Endothelial cell of umbilical vein (primary cell): ENCODE measurements at regions of chr10 and their contacts with region 1.

Region 1: GRCh38 chr10:25080880-25081581 is 64.6 kb downstream of the THNSL1 start:
- DNase-seq: peak; percentile 93
- H3K4me3 ChIP-seq: no peak overlapping the region
- H3K27ac ChIP-seq: no peak overlapping the region
- H3K4me1 ChIP-seq: no peaks in the 10 kb centered on the region
- H3K27me3 ChIP-seq: peaks cover 0 to 2% of the 10 kb centered on the region in 2 experiments
- CTCF ChIP-seq: peak; percentile 80 to 91
- POLR2A ChIP-seq: no peak

Region 2: GRCh38 chr10:24597426-24597825 is 483.6 kb before region 1 on chr10:
- CTCF ChIA-PET with region 1: interaction called, 13 read pairs
- POLR2A ChIA-PET with region 1: no interaction called
- dilution Hi-C with region 1: no loop called
- intact Hi-C with region 1: no loop called
- DNase-seq: no peak
- H3K4me3 ChIP-seq: no peak overlapping the region
- H3K27ac ChIP-seq: no peak overlapping the region
- H3K4me1 ChIP-seq: no peaks in the 10 kb centered on the region
- H3K27me3 ChIP-seq: no peaks in the 10 kb centered on the region
- CTCF ChIP-seq: no peak
- POLR2A ChIP-seq: no peak

Region 3: DNA sequence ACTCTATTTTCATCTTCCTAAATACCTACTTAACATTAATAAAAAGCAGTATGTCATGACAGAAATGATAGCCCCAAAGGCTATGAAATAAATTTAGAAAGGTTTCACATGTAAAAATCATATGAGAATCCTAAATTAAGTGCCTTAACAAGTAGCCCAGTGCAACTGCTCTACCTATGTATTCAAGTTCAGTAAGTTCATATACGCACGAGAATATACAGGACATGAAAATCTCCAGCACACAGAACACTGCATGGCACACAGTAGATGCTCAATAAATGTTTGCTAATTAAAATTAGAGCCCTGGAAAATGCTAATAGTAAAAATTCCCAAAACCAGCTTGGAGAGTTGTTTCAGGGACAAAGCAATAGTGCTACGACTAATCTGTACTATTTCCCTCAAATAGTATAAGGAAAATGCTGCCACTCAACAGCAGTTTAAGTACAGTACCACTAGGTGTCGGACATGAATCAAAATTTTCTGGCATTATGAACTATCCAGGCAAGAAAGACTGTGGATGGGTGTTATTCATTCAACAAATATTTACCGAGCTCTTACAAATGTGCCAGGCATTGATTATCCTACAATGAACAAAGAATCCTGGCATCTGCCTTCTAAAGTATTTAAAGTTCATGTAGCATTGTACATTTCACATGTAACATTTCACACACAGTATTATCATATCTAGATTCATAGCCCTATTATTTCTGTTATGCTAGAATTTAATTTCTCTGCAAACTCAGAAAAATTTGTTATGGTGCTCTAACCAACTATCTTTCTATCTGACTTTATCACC is 438.2 kb before region 1 on chr10:
- CTCF ChIA-PET with region 1: interaction called, 53 read pairs
- POLR2A ChIA-PET with region 1: no interaction called
- dilution Hi-C with region 1: no loop called
- intact Hi-C with region 1: loop called (anchors 1 kb)
- DNase-seq: peak; percentile 78
- H3K4me3 ChIP-seq: no peak overlapping the region
- H3K27ac ChIP-seq: no peak overlapping the region
- H3K4me1 ChIP-seq: peaks cover 27% of the 10 kb centered on the region
- H3K27me3 ChIP-seq: no peaks in the 10 kb centered on the region
- CTCF ChIP-seq: peak; percentile 52 to 63
- POLR2A ChIP-seq: no peak

Region 4: GRCh38 chr10:24958091-24958720 is 122.8 kb before region 1 on chr10:
- CTCF ChIA-PET with region 1: no interaction called
- POLR2A ChIA-PET with region 1: no interaction called
- dilution Hi-C with region 1: no loop called
- intact Hi-C with region 1: loop called (anchors 1 kb)
- DNase-seq: peak; percentile 80
- H3K4me3 ChIP-seq: no peak overlapping the region
- H3K27ac ChIP-seq: peak overlapping the region; percentile 68
- H3K4me1 ChIP-seq: peaks cover 17% of the 10 kb centered on the region
- H3K27me3 ChIP-seq: no peaks in the 10 kb centered on the region
- CTCF ChIP-seq: no peak
- POLR2A ChIP-seq: no peak

Region 5: GRCh38 chr10:25016376-25017154 is 64.5 kb before region 1 on chr10 and contains the start of gene THNSL1:
- CTCF ChIA-PET with region 1: interaction called, 11 read pairs
- POLR2A ChIA-PET with region 1: no interaction called
- dilution Hi-C with region 1: no loop called
- intact Hi-C with region 1: no loop called
- DNase-seq: peak; percentile 99
- H3K4me3 ChIP-seq: peak within 1 kb of the TSS; percentile 50 to 85 (median 62)
- H3K27ac ChIP-seq: peak within 1 kb of the TSS; percentile 88
- H3K4me1 ChIP-seq: peaks cover 17% of the 10 kb centered on the region
- H3K27me3 ChIP-seq: no peaks in the 10 kb centered on the region
- CTCF ChIP-seq: no peak
- POLR2A ChIP-seq: peak; percentile 83
- total RNA-seq, gene THNSL1: 1.9 and 2.1 TPM in 2 replicates

Region 6: DNA sequence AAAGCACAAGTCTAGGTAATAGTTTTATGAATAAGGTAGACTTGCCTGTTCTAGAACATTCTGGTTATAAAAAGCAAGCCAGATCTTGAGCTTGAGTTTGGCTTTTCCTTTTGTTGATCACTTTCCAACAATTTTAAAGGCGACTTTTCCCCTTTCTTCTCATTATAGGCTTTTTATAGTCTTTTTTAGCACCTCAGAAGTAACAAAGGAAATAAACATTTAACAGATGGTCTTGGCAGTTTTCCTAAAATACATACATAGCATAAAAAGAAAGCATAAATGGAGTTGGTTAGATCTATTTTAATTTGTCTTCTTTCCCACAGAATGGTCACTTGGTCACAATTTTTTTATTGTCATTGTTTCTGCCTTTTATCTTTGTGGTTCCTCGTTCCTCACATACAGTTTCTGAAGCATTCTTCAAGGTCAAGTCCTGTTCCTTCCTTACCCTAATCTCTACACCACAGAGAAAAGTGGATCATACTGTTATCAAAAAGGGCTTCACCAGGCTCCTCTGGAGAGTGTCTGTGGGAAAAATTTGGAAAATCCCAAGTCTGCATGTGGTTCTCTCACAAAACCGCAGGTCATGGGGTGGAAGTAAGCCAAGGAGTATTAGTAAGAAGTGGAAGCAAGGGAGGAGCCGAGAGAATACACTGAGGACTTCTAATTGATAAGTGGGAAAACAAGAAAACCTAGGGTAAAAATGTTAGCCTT is 33.3 kb before region 1 on chr10:
- CTCF ChIA-PET with region 1: interaction called, 34 read pairs
- POLR2A ChIA-PET with region 1: no interaction called
- dilution Hi-C with region 1: no loop called
- intact Hi-C with region 1: no loop called
- DNase-seq: peak; percentile 46
- H3K4me3 ChIP-seq: no peak overlapping the region
- H3K27ac ChIP-seq: no peak overlapping the region
- H3K4me1 ChIP-seq: peaks cover 2% of the 10 kb centered on the region
- H3K27me3 ChIP-seq: no peaks in the 10 kb centered on the region
- CTCF ChIP-seq: no peak
- POLR2A ChIP-seq: no peak

Region 7: GRCh38 chr10:25068152-25069058 is 12.6 kb before region 1 on chr10:
- CTCF ChIA-PET with region 1: interaction called, 46 read pairs
- POLR2A ChIA-PET with region 1: no interaction called
- dilution Hi-C with region 1: no loop called
- intact Hi-C with region 1: no loop called
- DNase-seq: peak; percentile 49
- H3K4me3 ChIP-seq: no peak overlapping the region
- H3K27ac ChIP-seq: peak overlapping the region; percentile 87
- H3K4me1 ChIP-seq: peaks cover 20% of the 10 kb centered on the region
- H3K27me3 ChIP-seq: no peaks in the 10 kb centered on the region
- CTCF ChIP-seq: no peak
- POLR2A ChIP-seq: no peak

Region 8: DNA sequence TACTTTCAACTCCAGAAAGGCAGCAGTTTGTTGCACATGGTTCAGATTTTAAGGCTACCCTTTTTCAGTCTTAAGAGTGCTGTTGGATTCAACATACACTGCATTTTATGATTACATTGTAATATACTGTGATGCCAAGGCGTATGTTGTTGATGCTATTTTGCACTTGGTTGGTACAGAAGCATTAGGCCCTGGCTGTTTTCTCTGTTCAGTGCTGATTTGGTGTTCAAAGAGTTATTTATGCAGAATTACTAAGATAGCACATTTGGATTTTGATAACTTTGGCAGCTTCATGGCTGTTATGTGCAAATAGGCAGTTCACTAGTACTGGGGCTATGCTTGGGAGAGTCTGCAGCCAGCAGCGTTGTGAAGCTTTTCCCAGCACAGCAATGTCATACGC is 101.6 kb after region 1 on chr10:
- CTCF ChIA-PET with region 1: no interaction called
- POLR2A ChIA-PET with region 1: no interaction called
- dilution Hi-C with region 1: no loop called
- intact Hi-C with region 1: no loop called
- DNase-seq: no peak
- H3K4me3 ChIP-seq: no peak overlapping the region
- H3K27ac ChIP-seq: no peak overlapping the region
- H3K4me1 ChIP-seq: no peaks in the 10 kb centered on the region
- H3K27me3 ChIP-seq: peaks cover 0 to 8% of the 10 kb centered on the region in 2 experiments
- CTCF ChIP-seq: no peak
- POLR2A ChIP-seq: no peak

Region 9: DNA sequence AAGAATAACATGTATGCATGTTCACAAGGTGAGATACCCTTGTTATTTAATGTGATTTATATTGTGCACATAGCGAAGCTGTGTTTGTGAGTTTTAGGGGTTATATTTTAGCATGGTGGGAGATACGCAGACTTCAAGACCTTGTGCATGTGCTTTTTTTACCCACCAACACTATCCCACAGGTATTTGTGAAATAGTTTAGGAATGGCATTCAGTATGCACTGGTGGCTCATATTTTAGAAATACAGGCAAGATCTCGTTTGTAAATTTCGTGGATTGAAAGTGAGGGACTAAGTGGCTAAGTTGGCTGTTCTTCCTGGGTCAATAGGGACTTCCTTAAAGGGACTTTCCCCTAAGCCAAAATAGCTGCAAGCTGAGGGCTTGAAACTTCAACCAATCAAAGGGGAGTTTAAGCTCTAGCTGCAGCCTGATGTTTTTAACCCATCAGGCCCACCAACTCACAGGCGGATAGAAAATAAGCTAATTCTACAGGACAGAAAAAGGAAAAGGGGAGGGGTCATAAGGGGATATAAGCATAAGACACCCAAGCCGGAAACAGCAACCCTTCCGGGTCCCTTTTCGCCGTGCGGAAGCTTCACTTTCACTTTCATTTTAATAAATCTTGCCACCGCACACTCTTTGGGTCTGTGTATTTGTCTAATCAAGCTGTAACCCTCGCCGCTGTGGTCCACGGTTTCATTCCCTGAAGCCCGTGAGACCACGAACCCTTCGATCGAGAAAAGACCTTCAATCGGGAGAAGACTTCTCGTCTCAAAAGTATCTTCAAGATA is 384.7 kb after region 1 on chr10:
- CTCF ChIA-PET with region 1: no interaction called
- POLR2A ChIA-PET with region 1: no interaction called
- dilution Hi-C with region 1: no loop called
- intact Hi-C with region 1: no loop called
- DNase-seq: no peak
- H3K4me3 ChIP-seq: no peak overlapping the region
- H3K27ac ChIP-seq: no peak overlapping the region
- H3K4me1 ChIP-seq: no peaks in the 10 kb centered on the region
- H3K27me3 ChIP-seq: no peaks in the 10 kb centered on the region
- CTCF ChIP-seq: no peak
- POLR2A ChIP-seq: no peak